Dorsolateral prefrontal cortex (tissue), 120 donors: ENCODE measurements at regions of chr11 and their contacts with region 1.

Region 1: GRCh38 chr11:1694064-1694845 is 2.7 kb upstream of the KRTAP5-6 start:
- DNase-seq: peak; percentile 78 to 92 (median 87)
- H3K4me3 ChIP-seq: peak overlapping the region; percentile 23 to 85 (median 60)
- H3K27ac ChIP-seq: peak overlapping the region in 49 of 59 donors; percentile 12 to 93 (median 81)
- H3K27me3 ChIP-seq: peaks cover 0 to 6% (median 0%) of the 10 kb centered on the region in 45 donors
- CTCF ChIP-seq: peak; percentile 82 to 100 (median 97)

Region 2: GRCh38 chr11:1652771-1653540 is 41.3 kb before region 1 on chr11:
- intact Hi-C with region 1: loop called in 1 of 2 experiments (anchors 2 kb)
- DNase-seq: peak; percentile 69 to 89 (median 80)
- H3K4me3 ChIP-seq: peak overlapping the region in 14 of 59 donors; percentile 3 to 36 (median 12)
- H3K27ac ChIP-seq: peak overlapping the region in 2 of 59 donors; percentile 46 to 57
- H3K27me3 ChIP-seq: peaks cover 0 to 20% (median 0%) of the 10 kb centered on the region in 45 donors
- CTCF ChIP-seq: peak; percentile 91 to 99 (median 98)

Region 3: DNA sequence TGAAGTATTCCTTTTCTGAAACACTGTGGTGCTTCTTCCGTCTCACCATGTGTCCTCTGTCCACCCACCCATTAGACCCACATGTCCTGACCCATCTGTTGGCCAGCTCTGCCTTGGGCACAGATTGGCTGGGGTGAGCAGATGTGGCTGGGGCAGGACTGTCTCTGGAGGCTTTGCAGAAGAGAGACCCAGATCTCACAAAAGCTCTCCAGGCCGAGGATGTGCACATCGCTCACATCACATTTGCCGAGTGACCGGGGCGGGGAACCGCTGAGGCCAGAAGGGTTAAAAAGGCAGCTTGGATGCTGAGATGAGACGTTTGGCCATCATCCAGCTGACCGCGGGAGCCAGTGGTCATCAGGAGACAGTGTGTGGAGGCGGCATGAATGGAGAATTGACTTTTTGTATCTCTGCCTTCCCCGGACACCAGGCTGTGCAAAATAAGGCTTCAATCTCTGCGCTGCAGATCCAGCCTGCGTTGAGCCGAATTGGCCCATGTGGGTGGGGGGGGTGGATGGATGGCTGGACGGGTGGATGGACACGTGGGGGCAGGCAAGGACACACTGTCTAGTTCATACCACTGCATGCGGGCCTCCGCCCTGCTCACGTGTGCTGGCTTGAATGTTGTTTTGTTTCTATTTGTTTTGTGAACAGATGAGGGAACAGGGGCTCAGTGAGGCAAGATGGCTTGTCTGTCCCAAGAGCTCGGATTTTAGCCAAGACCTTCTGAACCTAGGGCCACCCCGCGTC is 50.1 kb after region 1 on chr11:
- intact Hi-C with region 1: loop called (anchors 5 kb)
- DNase-seq: peak in 6 of 10 donors; percentile 57 to 72 (median 68)
- H3K4me3 ChIP-seq: peak overlapping the region in 20 of 59 donors; percentile 2 to 38 (median 10)
- H3K27ac ChIP-seq: peak overlapping the region in 44 of 59 donors; percentile 5 to 93 (median 58)
- H3K27me3 ChIP-seq: no peaks in the 10 kb centered on the region
- CTCF ChIP-seq: peak in 15 of 56 donors; percentile 6 to 28 (median 20)

Region 4: DNA sequence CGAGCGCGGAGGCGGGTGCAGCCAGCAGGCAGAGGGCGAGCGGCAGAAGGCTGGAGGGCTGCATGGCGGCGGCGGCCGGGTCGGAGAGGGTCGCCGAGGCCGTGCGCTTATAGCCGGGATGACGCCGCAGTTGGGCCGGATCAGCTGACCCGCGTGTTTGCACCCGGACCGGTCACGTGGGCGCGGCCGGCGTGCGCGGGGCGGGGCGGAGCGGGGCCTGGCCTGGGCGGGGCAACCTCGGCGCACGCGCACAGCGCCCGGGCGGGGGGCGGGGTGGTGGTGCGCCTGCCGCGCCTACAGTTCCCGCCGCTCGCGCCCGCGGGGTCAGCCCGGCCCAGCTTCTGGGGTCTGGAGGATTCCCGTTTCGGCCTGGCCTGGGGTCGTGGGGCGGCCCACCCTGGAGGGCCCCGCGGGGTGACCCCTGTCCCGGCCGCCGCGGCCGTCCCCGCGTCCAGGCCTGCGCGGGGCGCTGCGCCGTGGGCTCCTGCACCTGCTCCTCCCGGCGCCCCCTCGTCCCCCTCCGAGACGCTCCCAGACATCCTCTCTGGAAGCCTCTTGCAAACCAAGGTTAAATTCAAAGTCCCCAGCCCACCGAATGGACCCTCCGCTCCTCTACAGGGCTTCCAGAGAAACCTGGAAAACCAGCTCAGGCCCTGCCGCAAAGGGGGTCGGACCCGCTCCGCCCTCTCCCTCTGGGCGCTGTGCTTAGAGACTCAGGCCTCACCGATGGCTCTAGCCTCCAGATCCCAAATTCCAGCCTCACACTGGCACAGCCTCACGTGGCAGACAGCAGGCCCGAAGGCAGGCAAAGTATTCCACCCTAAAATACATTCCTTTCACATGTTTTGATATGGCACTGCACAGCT is 69.8 kb after region 1 on chr11 and contains the start of gene CTSD:
- intact Hi-C with region 1: loop called in 1 of 2 experiments (anchors 10 kb)
- DNase-seq: peak; percentile 84 to 95 (median 90)
- H3K4me3 ChIP-seq: peak within 1 kb of the TSS; percentile 67 to 100 (median 100)
- H3K27ac ChIP-seq: peak within 1 kb of the TSS; percentile 77 to 99 (median 98)
- H3K27me3 ChIP-seq: no peaks in the 10 kb centered on the region
- CTCF ChIP-seq: peak in 10 of 56 donors; percentile 9 to 38 (median 16)
- total RNA-seq, gene CTSD: 284 to 532 (median 387) TPM

Region 5: DNA sequence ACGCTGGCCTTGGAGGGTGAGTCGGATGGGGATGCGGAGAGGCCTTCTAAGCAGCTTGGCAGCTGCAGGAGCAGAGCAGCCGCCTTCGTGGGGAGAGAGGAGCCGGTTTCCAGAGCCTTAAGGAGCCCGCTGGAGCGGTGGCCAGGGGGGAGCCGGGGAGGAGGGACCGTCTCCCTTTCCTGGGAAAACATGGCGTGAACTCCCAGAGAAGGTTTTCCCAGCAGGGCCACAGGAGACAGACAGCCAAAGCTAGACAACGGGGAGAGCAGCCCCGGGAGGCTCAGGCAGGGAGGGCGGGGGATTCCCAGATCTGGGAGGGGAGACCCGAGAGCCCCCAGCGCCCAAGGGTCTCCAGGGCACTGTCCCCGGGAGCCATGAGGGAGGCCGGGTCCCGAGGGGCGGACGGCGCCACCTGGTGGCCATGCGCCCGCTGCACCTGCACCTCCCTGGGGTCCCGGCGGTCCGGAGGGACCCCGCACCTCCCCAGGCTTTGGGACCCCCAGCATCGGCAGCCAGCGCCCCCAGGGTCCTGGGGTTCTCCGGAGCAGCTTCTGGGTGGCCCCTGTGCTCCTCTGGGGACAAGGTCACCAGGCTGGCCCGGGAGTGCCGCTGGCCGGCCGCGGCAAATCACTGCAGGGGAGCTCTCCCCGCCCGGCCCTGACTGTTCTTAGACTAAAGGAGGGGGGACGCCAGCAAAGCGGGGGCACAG is 138.1 kb after region 1 on chr11:
- intact Hi-C with region 1: loop called (anchors 1 kb)
- DNase-seq: peak in 7 of 10 donors; percentile 43 to 81 (median 60)
- H3K4me3 ChIP-seq: peak overlapping the region in 57 of 59 donors; percentile 5 to 62 (median 43)
- H3K27ac ChIP-seq: peak overlapping the region in 13 of 59 donors; percentile 9 to 71 (median 44)
- H3K27me3 ChIP-seq: peaks cover 0 to 13% (median 0%) of the 10 kb centered on the region in 45 donors
- CTCF ChIP-seq: peak; percentile 94 to 100 (median 99)

Region 6: DNA sequence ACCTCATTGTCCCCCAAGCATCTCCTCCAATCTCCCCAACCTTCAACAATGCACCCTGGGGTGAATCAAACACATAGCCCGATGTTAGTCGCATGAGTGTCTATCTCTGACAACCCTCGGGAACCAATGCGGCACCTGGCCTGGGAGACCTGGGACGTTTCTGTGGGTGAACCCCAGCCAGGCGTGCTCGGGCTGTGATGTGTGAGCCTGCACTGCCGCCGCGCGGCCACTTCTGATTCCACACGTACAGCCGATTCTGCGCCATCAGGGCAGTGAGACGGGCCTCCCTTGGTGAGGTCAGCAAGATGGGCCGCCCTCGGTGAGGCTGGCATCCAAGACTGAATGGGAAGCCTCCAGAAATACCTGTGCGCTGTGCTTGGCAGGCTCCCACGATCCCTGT is 308.6 kb after region 1 on chr11:
- intact Hi-C with region 1: no loop called
- DNase-seq: no peak
- H3K4me3 ChIP-seq: no peak overlapping the region
- H3K27ac ChIP-seq: no peak overlapping the region
- H3K27me3 ChIP-seq: no peaks in the 10 kb centered on the region
- CTCF ChIP-seq: no peak

Region 7: GRCh38 chr11:2151500-2152257 is 457.4 kb after region 1 on chr11:
- intact Hi-C with region 1: loop called (anchors 1 to 10 kb)
- DNase-seq: peak; percentile 65 to 88 (median 80)
- H3K4me3 ChIP-seq: peak overlapping the region in 37 of 59 donors; percentile 2 to 43 (median 24)
- H3K27ac ChIP-seq: peak overlapping the region in 1 of 59 donors; percentile 10
- H3K27me3 ChIP-seq: peaks cover 0 to 52% (median 32%) of the 10 kb centered on the region in 45 donors
- CTCF ChIP-seq: peak; percentile 60 to 92 (median 77)